Esophagus muscularis mucosa (tissue), 4 donors: ENCODE measurements at regions of chr16 and their contacts with region 1.

Region 1: DNA sequence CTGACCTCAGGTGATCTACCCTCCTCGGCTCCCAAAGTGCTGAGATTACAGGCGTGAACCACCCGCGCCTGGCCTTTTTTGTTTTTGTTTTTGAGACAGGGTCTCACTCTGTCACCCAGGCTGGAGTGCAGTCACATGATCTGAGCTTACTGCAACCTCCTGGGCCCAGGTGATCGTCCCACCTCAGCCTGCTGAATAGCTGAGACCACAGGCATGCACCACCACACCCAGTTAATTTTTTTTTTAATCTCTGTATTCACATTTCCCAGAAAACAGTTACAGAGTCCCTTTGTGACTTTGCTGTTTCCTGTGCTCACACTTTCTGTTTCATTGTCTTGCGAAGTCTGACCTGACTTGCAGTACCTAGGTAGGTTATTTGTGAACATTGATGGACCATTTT is 2.7 kb downstream of the CLUAP1 start:
- DNase-seq: no peak
- H3K4me3 ChIP-seq: no peak overlapping the region
- H3K27ac ChIP-seq: no peak overlapping the region
- H3K4me1 ChIP-seq: peaks cover 19 to 39% (median 28%) of the 10 kb centered on the region in 4 donors
- H3K27me3 ChIP-seq: no peaks in the 10 kb centered on the region
- CTCF ChIP-seq: no peak
- EP300 ChIP-seq: no peak
- POLR2A ChIP-seq: no peak

Region 2: DNA sequence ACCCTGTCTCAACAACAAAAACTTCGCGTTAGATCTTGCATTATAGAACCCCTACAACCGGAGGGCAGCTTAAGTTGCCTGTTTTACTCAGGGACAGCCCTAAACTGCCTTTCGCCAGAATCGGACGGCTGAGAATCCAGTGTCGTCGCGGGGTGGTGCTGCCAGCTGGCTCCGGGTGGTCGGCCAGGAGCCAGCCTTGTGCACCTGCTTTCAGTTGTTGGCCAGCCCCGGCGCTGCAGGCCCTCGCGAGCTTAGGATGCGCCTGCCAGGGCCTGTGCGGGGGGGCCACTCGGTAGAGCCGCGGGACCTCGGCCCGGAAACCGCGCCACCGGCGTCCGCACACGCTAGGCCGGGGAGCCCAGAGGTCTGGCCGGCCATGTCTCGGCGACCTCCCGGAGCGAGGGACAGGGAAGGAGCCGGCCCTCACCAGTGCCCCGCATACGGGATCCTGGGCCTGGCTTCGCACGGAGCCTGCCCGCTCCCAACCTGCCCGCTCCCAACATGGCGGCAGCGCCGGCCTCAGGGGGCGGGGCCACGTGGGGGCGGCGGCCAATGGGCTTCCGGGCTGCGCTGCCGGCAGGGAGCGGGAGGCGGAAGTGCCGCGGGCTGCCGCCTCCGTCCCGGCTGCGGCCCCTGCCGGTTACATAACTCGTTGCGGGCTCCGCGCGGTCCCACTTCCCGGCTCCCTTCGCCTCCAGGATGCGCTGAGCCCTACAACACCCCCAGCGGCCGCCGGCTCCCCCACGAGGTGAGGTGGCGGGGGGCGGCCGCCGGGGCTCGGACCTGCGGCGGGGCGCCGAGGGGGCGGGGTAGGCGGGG is 45.9 kb before region 1 on chr16:
- intact Hi-C with region 1: loop called (anchors 5 kb)
- DNase-seq: peak; percentile 94
- H3K4me3 ChIP-seq: peak overlapping the region; percentile 85 to 93 (median 92)
- H3K27ac ChIP-seq: peak overlapping the region; percentile 92 to 98 (median 95)
- H3K4me1 ChIP-seq: peaks cover 50 to 69% (median 66%) of the 10 kb centered on the region in 4 donors
- H3K27me3 ChIP-seq: no peaks in the 10 kb centered on the region
- CTCF ChIP-seq: peak; percentile 46 to 68 (median 56)
- EP300 ChIP-seq: no peak
- POLR2A ChIP-seq: peak; percentile 10

Region 3: DNA sequence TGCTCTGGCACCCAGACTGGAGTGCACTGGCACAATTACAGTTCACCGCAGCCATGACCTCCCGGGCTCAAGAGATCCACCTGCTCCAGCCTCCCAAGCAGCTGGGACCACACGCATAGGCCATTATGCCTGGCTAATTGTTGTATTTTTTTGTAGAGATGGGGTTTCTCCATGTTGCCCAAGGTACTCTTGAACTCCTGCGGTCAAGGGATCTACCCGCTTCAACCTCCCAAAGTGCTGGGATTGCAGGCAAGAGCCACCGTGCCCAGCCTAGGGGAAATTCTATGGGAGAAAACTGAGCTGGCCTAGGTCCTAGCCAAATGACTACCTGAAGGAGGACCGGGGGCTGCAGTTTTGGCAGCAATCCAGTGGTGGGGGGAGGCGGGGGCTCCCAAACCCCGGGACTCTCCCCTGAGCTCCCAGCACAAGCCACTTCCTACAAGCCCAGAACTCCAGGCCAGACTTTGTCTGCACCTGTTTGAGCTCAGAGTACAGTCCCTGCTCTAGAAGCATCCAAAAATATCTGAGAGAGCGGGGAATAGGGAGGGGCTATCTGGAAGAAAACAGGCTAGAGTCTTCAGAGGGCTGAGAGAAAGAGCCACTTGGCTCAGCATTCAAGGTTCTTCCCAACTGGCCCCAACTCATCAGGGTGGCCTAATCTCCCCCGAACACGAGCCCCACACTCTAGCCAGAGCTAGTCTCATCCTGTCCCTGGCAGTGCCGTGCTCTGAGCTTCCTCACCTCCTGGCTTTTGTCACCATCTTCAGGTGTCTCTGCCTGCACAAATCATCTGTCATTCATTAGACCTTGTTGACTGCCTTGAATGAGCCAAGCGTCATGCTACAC is 729.2 kb after region 1 on chr16:
- intact Hi-C with region 1: no loop called
- DNase-seq: no peak
- H3K4me3 ChIP-seq: no peak overlapping the region
- H3K27ac ChIP-seq: peak overlapping the region in 1 of 4 donors; percentile 27
- H3K4me1 ChIP-seq: peaks cover 10 to 30% (median 15%) of the 10 kb centered on the region in 4 donors
- H3K27me3 ChIP-seq: no peaks in the 10 kb centered on the region
- CTCF ChIP-seq: no peak
- EP300 ChIP-seq: no peak
- POLR2A ChIP-seq: no peak